Activated CD4-positive, alpha-beta memory T cell treated with anti-CD3 and anti-CD28 coated beads for 36 hours (primary cell): ENCODE measurements at regions of chr21 and their contacts with region 1.

Region 1: GRCh38 chr21:14438211-14438610 is 55.3 kb upstream of the HSPA13 start:
- DNase-seq: no peak
- H3K4me3 Mint-ChIP-seq: no peak overlapping the region
- H3K27ac Mint-ChIP-seq: no peak overlapping the region
- H3K4me1 Mint-ChIP-seq: no peaks in the 10 kb centered on the region
- H3K27me3 Mint-ChIP-seq: no peaks in the 10 kb centered on the region

Region 2: GRCh38 chr21:14241297-14241696 is 196.9 kb before region 1 on chr21:
- CTCF ChIA-PET with region 1: no interaction called
- POLR2A ChIA-PET with region 1: no interaction called
- intact Hi-C with region 1: no loop called
- DNase-seq: no peak
- H3K4me3 Mint-ChIP-seq: no peak overlapping the region
- H3K27ac Mint-ChIP-seq: no peak overlapping the region
- H3K4me1 Mint-ChIP-seq: peaks cover 3% of the 10 kb centered on the region
- H3K27me3 Mint-ChIP-seq: no peaks in the 10 kb centered on the region

Region 3: DNA sequence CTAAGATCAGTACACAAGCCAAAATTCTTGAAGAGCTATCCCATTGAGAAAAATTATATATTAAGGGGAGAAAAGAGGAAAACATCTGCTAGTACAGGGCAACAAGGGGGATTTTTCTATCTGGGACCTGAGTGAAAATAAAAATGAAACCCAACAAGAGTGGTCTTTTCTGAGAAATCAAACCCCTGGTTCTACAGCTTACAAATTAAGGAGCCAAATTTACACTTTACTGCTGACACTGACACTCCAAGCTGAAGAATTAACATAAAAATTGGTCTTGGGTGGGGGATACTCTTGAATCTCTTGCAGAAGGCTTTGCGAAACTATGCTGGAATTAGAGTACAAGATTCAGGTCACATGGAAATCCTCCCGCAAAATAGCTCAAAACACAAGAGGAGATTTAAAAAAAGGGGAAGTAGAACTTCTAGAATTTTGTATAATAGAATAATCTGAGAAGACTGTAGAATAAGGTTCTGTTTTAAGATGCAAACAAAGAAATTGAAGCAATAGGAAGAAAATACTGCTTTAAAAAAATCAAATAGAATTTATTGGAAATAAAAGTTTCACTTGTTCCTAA is 23.2 kb before region 1 on chr21:
- CTCF ChIA-PET with region 1: no interaction called
- POLR2A ChIA-PET with region 1: no interaction called
- intact Hi-C with region 1: no loop called
- DNase-seq: no peak
- H3K4me3 Mint-ChIP-seq: no peak overlapping the region
- H3K27ac Mint-ChIP-seq: no peak overlapping the region
- H3K4me1 Mint-ChIP-seq: no peaks in the 10 kb centered on the region
- H3K27me3 Mint-ChIP-seq: peaks cover 4% of the 10 kb centered on the region

Region 4: GRCh38 chr21:14773777-14774345 is 335.6 kb after region 1 on chr21:
- CTCF ChIA-PET with region 1: no interaction called
- POLR2A ChIA-PET with region 1: no interaction called
- intact Hi-C with region 1: loop called (anchors 10 kb)
- DNase-seq: peak; percentile 70
- H3K4me3 Mint-ChIP-seq: no peak overlapping the region
- H3K27ac Mint-ChIP-seq: no peak overlapping the region
- H3K4me1 Mint-ChIP-seq: no peaks in the 10 kb centered on the region
- H3K27me3 Mint-ChIP-seq: peaks cover 3% of the 10 kb centered on the region